ENCODE measurements at regions of chr11 and their contacts with region 1.

Region 1: DNA sequence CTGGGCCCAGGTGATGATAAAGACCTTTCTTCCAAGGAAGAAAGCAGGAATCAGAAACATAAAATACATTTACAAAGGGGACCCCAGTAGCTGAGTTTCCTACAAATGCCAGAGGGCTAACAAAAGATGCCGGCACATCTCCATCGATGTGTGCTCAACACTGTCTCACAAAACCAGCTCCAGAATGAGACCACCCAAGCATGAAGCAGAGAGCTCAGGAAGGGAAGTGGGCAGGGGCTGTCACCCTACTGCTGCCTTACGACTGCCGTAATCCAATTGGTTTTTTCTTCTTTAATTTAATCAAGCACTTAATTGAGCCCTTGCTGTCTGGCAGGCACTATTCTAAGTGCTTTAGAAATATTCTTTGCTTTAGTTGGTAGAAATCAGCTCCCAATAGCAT is 26.1 kb downstream of the SMCO4 start:
- DNase-seq: no peak
- H3K4me3 ChIP-seq: no peak overlapping the region
- H3K4me3 Mint-ChIP-seq: no peak overlapping the region
- H3K27ac Mint-ChIP-seq: no peak overlapping the region
- H3K4me1 ChIP-seq: no peaks in the 10 kb centered on the region
- H3K4me1 Mint-ChIP-seq: peaks cover 7% of the 10 kb centered on the region
- H3K27me3 ChIP-seq: no peaks in the 10 kb centered on the region
- H3K27me3 Mint-ChIP-seq: no peaks in the 10 kb centered on the region
- CTCF ChIP-seq: no peak

Region 2: DNA sequence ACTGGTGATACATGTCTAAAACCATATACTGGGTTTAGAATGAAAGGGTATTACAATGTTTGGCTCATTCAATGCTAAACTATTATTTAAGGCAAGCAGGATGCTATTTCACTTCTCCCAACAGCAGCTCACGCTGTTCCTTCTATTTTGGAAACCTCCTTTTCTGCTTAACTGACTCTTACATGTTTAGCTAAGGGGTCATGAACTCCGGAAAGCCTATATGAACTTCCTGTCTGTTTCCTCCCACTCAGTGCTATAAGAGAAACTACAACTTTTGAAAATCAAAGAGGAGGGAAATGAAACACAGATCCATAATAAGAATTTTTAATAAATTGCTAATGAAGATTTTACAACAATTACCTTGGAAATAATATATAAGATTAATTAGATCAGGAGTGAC is 350.2 kb before region 1 on chr11:
- CTCF ChIA-PET with region 1: no interaction called
- POLR2A ChIA-PET with region 1: no interaction called
- intact Hi-C with region 1: no loop called
- DNase-seq: no peak
- H3K4me3 ChIP-seq: no peak overlapping the region
- H3K4me3 Mint-ChIP-seq: no peak overlapping the region
- H3K27ac Mint-ChIP-seq: no peak overlapping the region
- H3K4me1 ChIP-seq: no peaks in the 10 kb centered on the region
- H3K4me1 Mint-ChIP-seq: no peaks in the 10 kb centered on the region
- H3K27me3 ChIP-seq: no peaks in the 10 kb centered on the region
- H3K27me3 Mint-ChIP-seq: no peaks in the 10 kb centered on the region
- CTCF ChIP-seq: no peak

Region 3: DNA sequence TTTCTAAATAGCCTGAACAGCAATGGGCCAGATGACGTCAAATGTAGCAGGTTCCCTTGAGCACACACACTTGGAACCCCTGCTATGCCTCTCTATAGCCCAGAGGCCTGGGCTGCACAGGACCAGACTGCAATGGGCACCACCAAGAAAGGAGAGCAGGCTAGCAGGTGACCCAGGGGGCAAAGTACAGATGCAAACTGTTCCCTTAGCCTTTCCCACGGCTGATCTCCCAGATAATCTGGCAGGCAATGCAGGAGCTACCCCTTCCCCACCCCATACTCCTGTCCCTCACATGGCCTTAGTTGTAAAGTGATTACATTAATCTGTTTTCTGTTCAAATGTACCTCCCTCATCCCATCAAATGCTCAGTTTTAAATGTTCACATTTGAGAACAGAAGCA is 15.2 kb before region 1 on chr11:
- CTCF ChIA-PET with region 1: no interaction called
- POLR2A ChIA-PET with region 1: no interaction called
- intact Hi-C with region 1: loop called (anchors 1 kb)
- DNase-seq: no peak
- H3K4me3 ChIP-seq: no peak overlapping the region
- H3K4me3 Mint-ChIP-seq: no peak overlapping the region
- H3K27ac Mint-ChIP-seq: no peak overlapping the region
- H3K4me1 ChIP-seq: peaks cover 14% of the 10 kb centered on the region; the same call in 1 of the 2 replicates
- H3K4me1 Mint-ChIP-seq: peaks cover 8% of the 10 kb centered on the region
- H3K27me3 ChIP-seq: no peaks in the 10 kb centered on the region
- H3K27me3 Mint-ChIP-seq: no peaks in the 10 kb centered on the region
- CTCF ChIP-seq: no peak

Measured in Caco-2 (cell line).